ENCODE measurements at regions of chr2 and their contacts with region 1.

Region 1: DNA sequence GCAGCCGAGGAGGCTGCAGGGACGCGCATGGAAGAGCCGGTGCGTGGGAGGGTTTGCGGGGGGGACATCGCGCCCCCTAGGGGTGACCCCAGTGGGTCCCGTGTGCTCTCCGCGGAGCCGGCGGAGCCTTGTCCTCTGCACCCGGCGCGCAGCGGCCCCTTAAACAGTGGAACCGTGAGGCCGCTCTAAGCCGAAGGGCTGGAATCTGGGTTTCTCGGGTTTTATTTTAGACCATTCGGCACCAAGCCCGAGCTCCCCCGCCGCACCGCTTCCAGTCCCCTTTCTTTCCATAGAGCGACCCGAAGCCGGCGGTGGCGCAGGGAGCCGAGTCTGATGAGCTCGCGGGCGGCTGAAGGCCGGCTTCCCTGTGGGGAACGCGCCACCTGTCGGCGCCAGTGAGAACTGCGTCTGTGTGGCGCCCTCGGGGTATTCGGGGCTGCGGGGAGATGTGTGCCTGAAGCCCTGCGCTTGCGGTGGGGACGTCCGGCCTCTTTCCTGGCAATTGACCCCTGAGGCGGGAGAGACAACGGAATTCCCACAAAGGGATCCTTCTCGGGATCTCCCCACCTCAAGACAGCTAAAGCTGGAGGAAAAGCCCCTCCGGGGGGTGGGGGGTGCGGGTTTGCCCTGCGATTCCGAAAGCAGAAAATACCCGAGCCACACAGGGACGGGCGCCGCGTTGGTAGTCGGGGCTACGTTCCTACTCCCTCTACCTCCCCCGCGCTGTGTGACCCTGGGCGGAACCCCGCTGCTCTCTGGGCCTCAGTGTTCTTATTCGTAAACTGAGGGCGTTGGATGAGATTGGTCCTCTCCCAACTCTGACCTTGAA is 8.2 kb upstream of the EN1 start:
- DNase-seq: peak; percentile 86
- H3K4me3 Mint-ChIP-seq: peak overlapping the region; percentile 32
- H3K27ac Mint-ChIP-seq: no peak overlapping the region
- H3K4me1 Mint-ChIP-seq: peaks cover 18% of the 10 kb centered on the region
- H3K27me3 Mint-ChIP-seq: peaks cover 74% of the 10 kb centered on the region

Region 2: GRCh38 chr2:118202707-118203303 is 652.9 kb before region 1 on chr2:
- CTCF ChIA-PET with region 1: interaction called, 6 read pairs
- POLR2A ChIA-PET with region 1: no interaction called
- intact Hi-C with region 1: loop called (anchors 1 kb)
- DNase-seq: peak; percentile 67
- H3K4me3 Mint-ChIP-seq: no peak overlapping the region
- H3K27ac Mint-ChIP-seq: no peak overlapping the region
- H3K4me1 Mint-ChIP-seq: peaks cover 4% of the 10 kb centered on the region
- H3K27me3 Mint-ChIP-seq: peaks cover 17% of the 10 kb centered on the region

Region 3: DNA sequence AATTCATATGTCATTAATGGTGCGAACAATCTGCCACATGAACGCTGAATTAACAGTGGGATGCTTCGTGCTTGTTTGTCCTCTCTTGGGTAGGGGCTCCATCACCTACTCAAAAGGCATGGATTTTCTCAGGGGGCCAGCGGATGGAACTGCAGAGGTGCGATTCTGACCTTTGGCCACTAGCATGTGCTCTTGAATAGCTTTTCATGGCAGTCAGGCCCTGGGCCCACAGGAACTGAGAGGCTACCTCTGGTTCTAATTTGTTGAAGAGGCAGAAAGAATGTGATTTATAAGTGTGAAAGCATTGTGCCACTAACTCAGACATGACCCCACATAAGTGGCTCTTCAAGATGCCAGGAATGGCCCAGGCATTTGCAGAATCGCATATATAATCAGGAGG is 484.1 kb before region 1 on chr2:
- CTCF ChIA-PET with region 1: no interaction called
- POLR2A ChIA-PET with region 1: no interaction called
- intact Hi-C with region 1: loop called (anchors 5 kb)
- DNase-seq: peak; percentile 12
- H3K4me3 Mint-ChIP-seq: no peak overlapping the region
- H3K27ac Mint-ChIP-seq: no peak overlapping the region
- H3K4me1 Mint-ChIP-seq: no peaks in the 10 kb centered on the region
- H3K27me3 Mint-ChIP-seq: peaks cover 13% of the 10 kb centered on the region

Region 4: GRCh38 chr2:118492335-118492734 is 363.3 kb before region 1 on chr2:
- CTCF ChIA-PET with region 1: interaction called, 7 read pairs
- POLR2A ChIA-PET with region 1: no interaction called
- intact Hi-C with region 1: loop called (anchors 2 kb)
- DNase-seq: no peak
- H3K4me3 Mint-ChIP-seq: no peak overlapping the region
- H3K27ac Mint-ChIP-seq: no peak overlapping the region
- H3K4me1 Mint-ChIP-seq: no peaks in the 10 kb centered on the region
- H3K27me3 Mint-ChIP-seq: peaks cover 3% of the 10 kb centered on the region

Region 5: DNA sequence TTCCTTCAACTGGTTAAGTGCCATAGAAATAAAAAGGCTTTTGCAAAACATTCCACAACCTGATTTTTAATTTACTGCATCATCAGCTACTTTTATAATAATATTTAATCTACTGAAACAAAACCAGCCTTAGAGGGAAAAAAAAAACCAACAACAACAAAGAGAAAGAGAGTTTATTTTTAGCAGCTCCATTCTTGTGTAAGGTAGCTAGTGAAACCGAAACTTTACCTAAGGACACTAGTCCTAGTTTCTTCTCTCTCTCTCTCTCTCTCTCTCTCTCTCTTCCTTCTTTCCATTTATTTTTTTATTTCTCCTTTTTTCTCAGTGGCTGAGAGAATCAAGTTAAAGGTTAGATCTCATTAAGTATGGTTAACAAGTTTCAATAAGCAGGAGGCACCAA is 29.6 kb before region 1 on chr2:
- CTCF ChIA-PET with region 1: no interaction called
- POLR2A ChIA-PET with region 1: no interaction called
- intact Hi-C with region 1: no loop called
- DNase-seq: no peak
- H3K4me3 Mint-ChIP-seq: no peak overlapping the region
- H3K27ac Mint-ChIP-seq: no peak overlapping the region
- H3K4me1 Mint-ChIP-seq: no peaks in the 10 kb centered on the region
- H3K27me3 Mint-ChIP-seq: peaks cover 34% of the 10 kb centered on the region

Region 6: DNA sequence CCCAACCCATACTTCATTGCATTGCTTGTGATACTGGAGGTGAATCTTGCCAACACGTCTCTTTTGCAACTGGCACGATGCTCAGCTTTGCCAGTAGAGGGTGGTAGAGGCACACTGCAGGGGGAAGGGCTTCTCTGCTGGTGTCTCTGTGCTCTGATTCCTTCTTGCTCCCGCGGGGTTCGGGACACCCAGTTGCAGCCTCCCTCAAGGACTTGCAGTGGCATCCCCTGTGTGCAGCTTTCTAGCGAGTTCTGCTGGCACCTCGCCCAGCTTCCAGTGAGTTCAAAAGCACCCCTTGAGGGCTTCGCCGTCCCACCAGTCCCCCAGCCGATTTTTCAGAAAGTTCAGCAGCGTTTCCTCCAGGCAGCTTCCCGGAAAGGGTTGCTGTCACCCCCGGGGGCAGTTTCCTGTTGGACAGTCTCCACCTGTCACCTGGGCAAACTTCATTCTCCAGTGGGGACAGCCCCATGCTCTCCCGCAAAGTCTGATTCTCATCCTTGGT is 27.1 kb after region 1 on chr2:
- CTCF ChIA-PET with region 1: interaction called, 10 read pairs
- POLR2A ChIA-PET with region 1: no interaction called
- intact Hi-C with region 1: no loop called
- DNase-seq: peak; percentile 59
- H3K4me3 Mint-ChIP-seq: peak overlapping the region; percentile 29
- H3K27ac Mint-ChIP-seq: no peak overlapping the region
- H3K4me1 Mint-ChIP-seq: no peaks in the 10 kb centered on the region
- H3K27me3 Mint-ChIP-seq: peaks cover 25% of the 10 kb centered on the region